CD14-positive monocyte (primary cell): ENCODE measurements at regions of chr1 and their contacts with region 1.

Region 1: GRCh38 chr1:172443626-172444453 is at the start of gene PIGC:
- DNase-seq: peak; percentile 84 to 91 (median 88)
- H3K4me3 ChIP-seq: peak within 1 kb of the TSS; percentile 66 to 88 (median 82)
- H3K4me3 Mint-ChIP-seq: peak within 1 kb of the TSS; percentile 85 to 97
- H3K27ac ChIP-seq: peak within 1 kb of the TSS; percentile 51 to 90
- H3K27ac Mint-ChIP-seq: peak within 1 kb of the TSS; percentile 81 to 93 (median 91)
- H3K4me1 ChIP-seq: peaks cover 19 to 42% of the 10 kb centered on the region in 2 donors
- H3K4me1 Mint-ChIP-seq: peaks cover 47% of the 10 kb centered on the region
- H3K27me3 ChIP-seq: no peaks in the 10 kb centered on the region
- H3K27me3 Mint-ChIP-seq: peaks cover 0 to 2% (median 0%) of the 10 kb centered on the region in 3 donors
- CTCF ChIP-seq: peak; percentile 84
- polyA plus RNA-seq, gene PIGC: 11.5 to 61.5 (median 51.1) TPM

Region 2: GRCh38 chr1:171841050-171841940 is 602.5 kb before region 1 on chr1 and contains the start of gene DNM3:
- intact Hi-C with region 1: loop called in 1 of 2 experiments (anchors 10 kb)
- DNase-seq: peak; percentile 53 to 70 (median 70)
- H3K4me3 ChIP-seq: peak within 1 kb of the TSS; percentile 78 to 86 (median 81)
- H3K4me3 Mint-ChIP-seq: peak within 1 kb of the TSS; percentile 90 to 94
- H3K27ac ChIP-seq: no peak within 1 kb of the TSS
- H3K27ac Mint-ChIP-seq: peak within 1 kb of the TSS in 5 of 7 donors; percentile 64 to 77 (median 66)
- H3K4me1 ChIP-seq: peaks cover 18 to 24% of the 10 kb centered on the region in 2 donors
- H3K4me1 Mint-ChIP-seq: peaks cover 20% of the 10 kb centered on the region
- H3K27me3 ChIP-seq: peaks cover 10 to 23% of the 10 kb centered on the region in 2 donors
- H3K27me3 Mint-ChIP-seq: peaks cover 12 to 24% (median 14%) of the 10 kb centered on the region in 3 donors
- CTCF ChIP-seq: no peak
- polyA plus RNA-seq, gene DNM3: 0.15 TPM in 1 of 3 donors, not detected in the others

Region 3: GRCh38 chr1:172180501-172181285 is 263.1 kb before region 1 on chr1:
- intact Hi-C with region 1: no loop called
- DNase-seq: peak; percentile 5 to 15 (median 6)
- H3K4me3 ChIP-seq: peak overlapping the region; percentile 15 to 72 (median 34)
- H3K4me3 Mint-ChIP-seq: peak overlapping the region; percentile 49 to 87
- H3K27ac ChIP-seq: peak overlapping the region; percentile 4 to 83
- H3K27ac Mint-ChIP-seq: peak overlapping the region; percentile 73 to 92 (median 86)
- H3K4me1 ChIP-seq: peaks cover 21 to 36% of the 10 kb centered on the region in 2 donors
- H3K4me1 Mint-ChIP-seq: peaks cover 29% of the 10 kb centered on the region
- H3K27me3 ChIP-seq: no peaks in the 10 kb centered on the region
- H3K27me3 Mint-ChIP-seq: peaks cover 0 to 1% (median 0%) of the 10 kb centered on the region in 3 donors
- CTCF ChIP-seq: no peak